ENCODE measurements at regions of chr17 and their contacts with region 1.

Region 1: GRCh38 chr17:2814481-2815341 is 18.5 kb downstream of the RAP1GAP2 start:
- DNase-seq: peak; percentile 97
- H3K4me3 Mint-ChIP-seq: peak overlapping the region; percentile 66
- H3K27ac Mint-ChIP-seq: peak overlapping the region; percentile 93
- H3K4me1 Mint-ChIP-seq: peaks cover 48% of the 10 kb centered on the region
- H3K27me3 Mint-ChIP-seq: peaks cover 62% of the 10 kb centered on the region

Region 2: DNA sequence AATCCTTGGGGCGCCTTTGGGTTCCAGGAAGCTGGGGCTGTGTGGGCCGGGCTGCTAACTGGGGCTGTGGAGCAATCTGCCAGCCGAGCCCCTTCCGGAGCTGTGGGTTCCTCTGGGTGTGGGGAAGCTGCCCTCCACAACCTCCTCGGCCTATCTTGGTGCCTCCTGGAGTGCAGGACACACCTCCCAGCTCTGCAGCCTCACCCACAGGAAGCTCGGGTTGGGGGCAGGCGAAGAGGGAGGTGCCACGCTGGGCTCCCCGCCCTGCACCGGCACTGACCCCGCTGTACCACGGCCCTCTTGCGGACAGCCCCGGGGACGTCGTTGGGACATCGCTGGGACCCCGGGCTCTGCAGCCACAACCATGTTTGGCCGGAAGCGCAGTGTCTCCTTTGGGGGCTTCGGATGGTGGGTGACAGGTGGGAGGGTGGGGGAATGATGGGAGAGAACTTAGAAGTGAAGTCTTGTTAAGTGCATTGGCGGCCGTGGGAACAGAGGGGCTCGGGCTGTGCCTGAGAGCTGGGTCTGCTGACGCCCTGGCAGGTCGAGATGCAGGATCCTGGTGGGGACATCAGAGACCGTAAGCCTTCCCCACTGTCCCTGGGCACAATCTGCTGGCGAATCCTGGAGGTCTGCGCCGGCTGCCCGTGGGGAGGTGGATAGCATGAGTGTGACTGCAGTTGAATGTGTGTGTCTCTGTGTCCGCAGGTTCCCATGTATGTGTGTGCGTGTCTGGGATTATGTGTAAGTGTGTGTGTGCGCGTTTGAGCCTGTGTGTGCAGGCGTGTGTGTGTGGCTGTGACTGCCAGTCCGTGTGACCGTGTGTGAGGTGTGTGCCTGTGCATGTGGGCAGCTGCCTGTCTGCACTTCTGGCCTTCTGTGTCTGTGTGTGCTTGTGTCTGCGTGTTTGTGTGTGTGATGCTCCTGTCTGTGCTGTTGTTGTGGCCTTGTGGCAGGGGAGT is 18.3 kb before region 1 on chr17 and contains the start of gene RAP1GAP2:
- CTCF ChIA-PET with region 1: interaction called, 12 read pairs
- DNase-seq: peak; percentile 91
- H3K4me3 Mint-ChIP-seq: peak within 1 kb of the TSS; percentile 93
- H3K27ac Mint-ChIP-seq: peak within 1 kb of the TSS; percentile 78
- H3K4me1 Mint-ChIP-seq: peaks cover 81% of the 10 kb centered on the region
- H3K27me3 Mint-ChIP-seq: peaks cover 75% of the 10 kb centered on the region

Region 3: GRCh38 chr17:2924211-2924610 is 109.5 kb after region 1 on chr17:
- CTCF ChIA-PET with region 1: no interaction called
- DNase-seq: no peak
- H3K4me3 Mint-ChIP-seq: no peak overlapping the region
- H3K27ac Mint-ChIP-seq: no peak overlapping the region
- H3K4me1 Mint-ChIP-seq: no peaks in the 10 kb centered on the region
- H3K27me3 Mint-ChIP-seq: no peaks in the 10 kb centered on the region

Measured in activated naive CD4-positive, alpha-beta T cell treated with anti-CD3 and anti-CD28 coated beads, Interleukin-2, amount 10 ng/mL, durations not matched to agents 7 days and 5 days (primary cell).